ENCODE measurements at regions of chr20 and their contacts with region 1.

Region 1: DNA sequence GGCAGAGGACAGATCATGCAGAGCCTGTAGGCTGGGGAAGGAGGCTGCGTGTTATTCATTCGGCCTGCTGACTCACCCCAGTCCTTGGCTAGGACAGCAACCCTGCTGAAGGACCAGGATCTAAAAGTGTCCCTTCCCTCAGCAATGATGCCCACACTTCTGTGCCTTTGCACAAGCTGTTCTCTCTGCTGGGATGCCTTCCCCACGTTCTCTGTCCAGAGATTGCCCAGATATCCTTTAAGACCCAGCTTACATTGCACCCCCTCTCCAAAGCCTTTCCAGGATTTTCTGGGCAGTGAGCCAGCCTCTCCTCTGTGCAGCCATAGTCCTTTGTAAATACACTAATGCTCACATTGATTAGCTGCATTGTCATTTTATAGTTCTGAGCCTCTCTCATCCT is 99.3 kb upstream of the CHD6 start:
- DNase-seq: no peak
- ATAC-seq: no peak
- H3K4me3 Mint-ChIP-seq: no peak overlapping the region
- H3K27ac Mint-ChIP-seq: no peak overlapping the region
- H3K4me1 Mint-ChIP-seq: no peaks in the 10 kb centered on the region
- H3K27me3 Mint-ChIP-seq: no peaks in the 10 kb centered on the region

Region 2: GRCh38 chr20:41669708-41670263 is 47.7 kb before region 1 on chr20:
- CTCF ChIA-PET with region 1: no interaction called
- DNase-seq: no peak
- ATAC-seq: no peak
- H3K4me3 Mint-ChIP-seq: no peak overlapping the region
- H3K27ac Mint-ChIP-seq: no peak overlapping the region
- H3K4me1 Mint-ChIP-seq: no peaks in the 10 kb centered on the region
- H3K27me3 Mint-ChIP-seq: peaks cover 19% of the 10 kb centered on the region

Region 3: GRCh38 chr20:41686961-41687360 is 30.5 kb before region 1 on chr20:
- CTCF ChIA-PET with region 1: no interaction called
- DNase-seq: no peak
- ATAC-seq: no peak
- H3K4me3 Mint-ChIP-seq: no peak overlapping the region
- H3K27ac Mint-ChIP-seq: no peak overlapping the region
- H3K4me1 Mint-ChIP-seq: no peaks in the 10 kb centered on the region
- H3K27me3 Mint-ChIP-seq: peaks cover 12% of the 10 kb centered on the region

Region 4: DNA sequence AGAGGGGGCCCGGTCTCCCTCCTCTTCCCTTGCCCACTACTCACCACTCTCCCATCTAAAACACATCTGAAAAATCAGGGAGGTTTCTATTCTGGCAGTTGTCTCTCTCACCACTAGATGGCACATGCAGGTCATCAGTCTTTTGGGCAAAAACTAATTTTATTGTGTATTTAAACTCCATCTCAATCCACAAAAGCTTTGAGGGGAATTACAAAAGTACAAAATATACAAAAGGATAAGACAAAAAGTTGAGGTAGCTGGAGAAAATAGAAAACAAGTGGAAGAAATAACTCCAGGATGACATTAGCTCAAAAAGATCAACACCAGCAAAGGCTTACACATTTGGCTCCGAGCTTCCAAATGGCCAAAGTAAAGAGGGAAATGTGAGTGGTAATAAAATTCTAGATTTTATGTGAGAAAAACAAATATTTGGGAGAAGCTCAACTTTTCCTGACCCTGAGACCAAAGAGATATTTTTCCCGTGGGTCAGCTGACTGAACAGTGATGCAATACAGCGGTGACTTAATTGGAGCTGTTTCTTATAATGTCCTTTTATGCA is 19.5 kb before region 1 on chr20:
- CTCF ChIA-PET with region 1: interaction called, 12 read pairs
- DNase-seq: no peak
- ATAC-seq: no peak
- H3K4me3 Mint-ChIP-seq: no peak overlapping the region
- H3K27ac Mint-ChIP-seq: no peak overlapping the region
- H3K4me1 Mint-ChIP-seq: peaks cover 22% of the 10 kb centered on the region
- H3K27me3 Mint-ChIP-seq: no peaks in the 10 kb centered on the region

Region 5: GRCh38 chr20:41927189-41927588 is 209.7 kb after region 1 on chr20:
- CTCF ChIA-PET with region 1: no interaction called
- DNase-seq: no peak
- ATAC-seq: no peak
- H3K4me3 Mint-ChIP-seq: no peak overlapping the region
- H3K27ac Mint-ChIP-seq: no peak overlapping the region
- H3K4me1 Mint-ChIP-seq: no peaks in the 10 kb centered on the region
- H3K27me3 Mint-ChIP-seq: peaks cover 2% of the 10 kb centered on the region

Measured in activated CD8-positive, alpha-beta memory T cell treated with anti-CD3 and anti-CD28 coated beads, Interleukin-2, amount 10 ng/mL, durations not matched to agents 7 days and 5 days (primary cell).